ENCODE measurements at regions of chr3 and their contacts with region 1.

Region 1: DNA sequence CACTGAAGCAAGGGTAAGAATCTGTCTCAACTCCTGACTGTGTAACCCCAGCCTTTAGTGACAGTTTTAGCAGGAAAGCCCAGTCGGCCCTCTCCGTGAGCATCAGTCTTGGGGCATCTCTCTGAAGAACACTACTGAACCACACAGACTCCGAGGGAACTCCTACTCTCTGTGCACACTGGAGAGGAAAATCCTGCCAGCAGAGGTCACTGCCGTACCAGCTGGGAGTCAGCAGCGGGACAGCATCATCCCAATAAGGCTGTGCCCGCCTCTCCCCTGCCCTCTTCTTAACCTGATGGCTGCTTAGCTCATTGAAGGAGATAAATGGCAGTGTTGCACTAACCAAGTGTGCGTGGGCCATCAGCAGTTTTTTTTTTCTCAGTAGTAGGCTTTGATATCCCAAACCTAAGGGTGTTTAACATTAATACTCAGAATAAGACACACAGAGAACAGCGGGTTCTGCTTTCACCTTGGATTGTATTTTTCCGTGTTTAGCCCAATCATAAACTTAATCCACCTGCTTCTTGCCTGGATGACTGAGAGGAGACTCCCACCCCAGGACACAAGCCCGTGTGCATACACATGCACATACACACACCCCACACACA is 26.6 kb upstream of the RASA2 start:
- DNase-seq: no peak
- H3K4me3 ChIP-seq: no peak overlapping the region
- CTCF ChIP-seq: peak; percentile 89

Region 2: GRCh38 chr3:141311496-141312353 is 148.5 kb before region 1 on chr3:
- CTCF ChIA-PET with region 1: interaction called, 624 read pairs
- POLR2A ChIA-PET with region 1: interaction called, 7 read pairs
- DNase-seq: peak; percentile 88
- H3K4me3 ChIP-seq: peak overlapping the region; percentile 96
- CTCF ChIP-seq: peak; percentile 89

Region 3: DNA sequence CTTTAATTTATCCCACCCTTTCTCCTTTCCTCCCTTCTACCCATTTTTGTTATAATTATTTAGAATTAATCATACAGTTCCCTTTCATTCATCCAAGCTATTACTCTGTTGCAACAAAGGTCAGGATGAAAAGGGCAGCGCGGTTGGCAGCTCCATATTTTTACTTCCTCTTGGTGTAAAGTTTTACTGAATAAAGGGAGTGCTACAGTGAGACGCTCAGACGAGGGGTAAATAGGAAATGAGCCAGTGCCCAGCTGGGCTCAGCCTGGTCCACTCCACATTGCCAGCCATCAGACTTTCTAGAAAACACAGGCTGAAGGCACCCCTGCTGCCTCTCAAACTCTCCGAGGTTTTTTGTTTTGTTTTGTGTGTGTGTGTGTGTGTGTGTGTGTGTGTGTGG is 113.8 kb before region 1 on chr3:
- CTCF ChIA-PET with region 1: interaction called, 13 read pairs
- POLR2A ChIA-PET with region 1: no interaction called
- DNase-seq: no peak
- H3K4me3 ChIP-seq: no peak overlapping the region
- CTCF ChIP-seq: no peak

Region 4: GRCh38 chr3:141471160-141471559 is 11.0 kb after region 1 on chr3:
- CTCF ChIA-PET with region 1: interaction called, 44 read pairs
- POLR2A ChIA-PET with region 1: no interaction called
- DNase-seq: no peak
- H3K4me3 ChIP-seq: no peak overlapping the region
- CTCF ChIP-seq: no peak

Region 5: GRCh38 chr3:141544697-141545096 is 84.5 kb after region 1 on chr3:
- CTCF ChIA-PET with region 1: interaction called, 10 read pairs
- POLR2A ChIA-PET with region 1: no interaction called
- DNase-seq: no peak
- H3K4me3 ChIP-seq: no peak overlapping the region
- CTCF ChIP-seq: no peak

Region 6: GRCh38 chr3:141570068-141570467 is 109.9 kb after region 1 on chr3:
- CTCF ChIA-PET with region 1: interaction called, 517 read pairs
- POLR2A ChIA-PET with region 1: no interaction called
- DNase-seq: no peak
- H3K4me3 ChIP-seq: no peak overlapping the region
- CTCF ChIP-seq: no peak

Region 7: DNA sequence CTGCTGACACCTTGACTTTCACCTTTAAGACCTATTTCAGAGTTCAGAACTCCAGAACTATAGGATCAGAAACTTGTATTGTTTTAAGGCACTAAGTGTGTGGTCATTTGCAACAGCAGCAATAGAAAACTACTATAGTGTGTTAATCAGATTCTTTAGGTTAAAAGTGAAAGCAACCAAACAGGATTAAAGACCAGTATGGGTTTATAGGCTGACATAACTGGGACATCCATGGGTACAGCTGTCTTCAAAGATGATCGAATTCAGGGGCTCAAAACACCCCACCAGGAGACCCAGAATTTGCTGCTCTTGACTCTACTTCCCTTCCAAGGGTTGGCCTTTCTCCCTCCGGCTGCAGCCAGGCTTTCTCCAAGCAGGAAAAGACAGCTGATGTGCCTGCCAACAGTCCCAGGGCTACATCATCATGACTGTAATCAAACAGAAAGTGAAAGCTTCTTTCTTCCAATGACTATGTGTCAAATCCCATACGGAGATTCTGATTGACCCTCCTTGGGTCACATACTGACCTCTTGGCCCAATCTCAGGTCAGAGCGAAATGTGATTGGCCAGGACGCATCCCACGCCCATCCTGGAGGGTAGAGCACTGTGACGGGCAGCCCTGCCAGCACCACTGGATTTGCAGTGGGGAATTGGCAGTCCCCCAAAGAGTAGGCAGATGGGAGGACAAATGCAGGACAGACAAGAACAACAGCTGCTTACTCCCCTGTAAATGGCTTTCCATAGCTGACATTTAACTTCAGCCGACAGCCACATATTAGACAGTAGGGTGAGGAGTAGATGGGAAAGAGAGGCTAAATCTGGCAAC is 226.5 kb after region 1 on chr3:
- CTCF ChIA-PET with region 1: no interaction called
- POLR2A ChIA-PET with region 1: no interaction called
- DNase-seq: no peak
- H3K4me3 ChIP-seq: peak overlapping the region; percentile 35
- CTCF ChIP-seq: no peak

Measured in AG04449 (cell line).